Endothelial cell of umbilical vein (primary cell): ENCODE measurements at regions of chr20 and their contacts with region 1.

Region 1: DNA sequence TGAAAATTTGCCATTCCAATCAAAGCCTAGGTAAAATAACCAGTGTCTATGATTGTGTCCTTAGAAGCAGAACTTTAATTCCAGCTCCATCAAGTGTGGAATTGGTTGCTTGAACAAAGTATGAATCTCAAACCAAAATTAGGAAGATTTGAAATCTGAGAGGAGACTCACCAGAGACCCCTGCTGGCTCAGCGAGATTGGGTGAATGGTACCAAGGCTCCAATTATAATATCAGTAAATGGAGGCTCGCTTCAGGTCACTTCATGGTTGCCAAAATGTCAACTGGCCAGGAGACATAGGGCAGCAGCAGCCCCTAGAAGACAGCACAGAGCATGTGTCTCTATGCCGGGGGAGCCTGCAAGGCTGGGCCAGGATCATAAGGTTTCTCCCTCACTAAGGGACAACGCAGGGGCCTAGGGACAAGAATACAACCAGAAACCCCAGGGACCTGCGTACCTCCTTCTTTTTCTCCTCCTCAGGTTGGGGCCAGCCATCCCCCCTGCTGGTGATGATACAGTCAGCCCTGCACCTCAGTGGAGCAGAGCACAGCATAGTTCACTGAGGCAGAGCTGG is 14.0 kb downstream of the RBL1 start:
- DNase-seq: peak; percentile 16
- H3K4me3 ChIP-seq: no peak overlapping the region
- H3K27ac ChIP-seq: no peak overlapping the region
- H3K4me1 ChIP-seq: no peaks in the 10 kb centered on the region
- H3K27me3 ChIP-seq: no peaks in the 10 kb centered on the region
- CTCF ChIP-seq: peak; percentile 22 to 52
- POLR2A ChIP-seq: no peak

Region 2: GRCh38 chr20:37007898-37008649 is 73.7 kb before region 1 on chr20:
- CTCF ChIA-PET with region 1: interaction called, 22 read pairs
- POLR2A ChIA-PET with region 1: no interaction called
- dilution Hi-C with region 1: no loop called
- intact Hi-C with region 1: no loop called
- DNase-seq: peak; percentile 42
- H3K4me3 ChIP-seq: no peak overlapping the region
- H3K27ac ChIP-seq: no peak overlapping the region
- H3K4me1 ChIP-seq: no peaks in the 10 kb centered on the region
- H3K27me3 ChIP-seq: no peaks in the 10 kb centered on the region
- CTCF ChIP-seq: peak in 1 of 2 donors; percentile 10
- POLR2A ChIP-seq: no peak